MCF 10A (cell line): ENCODE measurements at regions of chr4 and their contacts with region 1.

Region 1: DNA sequence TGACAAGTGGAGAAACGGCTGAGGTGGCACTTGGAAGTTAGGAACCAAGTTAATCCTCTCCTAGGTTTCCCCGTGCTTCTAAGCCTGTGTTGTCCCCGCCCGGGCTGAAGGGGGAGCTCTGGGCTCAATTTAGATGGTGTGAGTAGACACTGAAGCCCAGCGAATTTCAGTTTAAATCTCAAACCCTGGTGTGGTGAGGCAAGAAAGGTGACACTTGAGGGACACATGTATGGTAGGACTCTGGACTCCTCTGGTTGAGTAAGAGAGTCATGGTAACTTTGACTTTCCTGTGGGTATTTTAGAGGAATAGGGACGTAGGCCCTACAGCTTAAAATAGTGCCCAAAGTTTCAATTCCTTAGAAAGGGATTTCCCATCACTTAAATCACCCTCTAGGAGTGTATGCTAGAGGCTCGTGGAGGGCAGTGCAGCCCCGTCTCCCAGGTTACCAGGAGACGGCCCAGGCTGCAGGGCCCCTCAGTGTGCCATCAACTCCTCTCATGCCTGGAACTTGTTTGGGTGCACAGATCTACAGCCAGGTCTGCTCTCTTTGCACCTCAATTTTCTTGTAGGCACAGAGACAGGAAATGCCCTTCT is 24.0 kb downstream of the HAND2 start:
- DNase-seq: peak; percentile 60
- H3K4me3 Mint-ChIP-seq: no peak overlapping the region
- H3K27ac Mint-ChIP-seq: no peak overlapping the region
- H3K4me1 Mint-ChIP-seq: no peaks in the 10 kb centered on the region
- H3K27me3 Mint-ChIP-seq: no peaks in the 10 kb centered on the region
- CTCF ChIP-seq: peak; percentile 44

Region 2: DNA sequence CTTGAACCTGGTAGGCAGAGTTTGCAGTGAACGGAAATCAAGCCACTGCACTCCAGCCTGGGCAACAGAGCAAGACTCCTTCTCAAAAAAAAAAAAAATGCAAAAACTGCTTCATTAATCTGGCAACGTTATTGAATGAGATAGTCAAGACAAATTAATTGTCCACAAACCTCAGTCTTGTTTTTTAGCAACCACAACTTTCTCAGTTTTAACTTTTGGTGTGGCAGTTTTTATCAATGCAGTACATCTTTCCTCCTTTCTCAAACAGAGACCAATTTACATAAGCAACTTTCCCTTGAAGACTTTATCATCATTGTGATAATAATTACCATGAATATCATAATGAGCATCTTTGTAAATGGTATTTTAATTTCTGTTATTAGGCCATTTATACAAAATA is 1754.5 kb before region 1 on chr4:
- CTCF ChIA-PET with region 1: no interaction called
- POLR2A ChIA-PET with region 1: no interaction called
- intact Hi-C with region 1: no loop called
- DNase-seq: no peak
- H3K4me3 Mint-ChIP-seq: no peak overlapping the region
- H3K27ac Mint-ChIP-seq: no peak overlapping the region
- H3K4me1 Mint-ChIP-seq: no peaks in the 10 kb centered on the region
- H3K27me3 Mint-ChIP-seq: peaks cover 70% of the 10 kb centered on the region
- CTCF ChIP-seq: no peak

Region 3: GRCh38 chr4:173494013-173494970 is 11.7 kb before region 1 on chr4:
- CTCF ChIA-PET with region 1: interaction called, 15 read pairs
- POLR2A ChIA-PET with region 1: no interaction called
- intact Hi-C with region 1: no loop called
- DNase-seq: peak; percentile 76
- H3K4me3 Mint-ChIP-seq: peak overlapping the region; percentile 67
- H3K27ac Mint-ChIP-seq: no peak overlapping the region
- H3K4me1 Mint-ChIP-seq: peaks cover 8% of the 10 kb centered on the region
- H3K27me3 Mint-ChIP-seq: peaks cover 14% of the 10 kb centered on the region
- CTCF ChIP-seq: peak; percentile 61

Region 4: DNA sequence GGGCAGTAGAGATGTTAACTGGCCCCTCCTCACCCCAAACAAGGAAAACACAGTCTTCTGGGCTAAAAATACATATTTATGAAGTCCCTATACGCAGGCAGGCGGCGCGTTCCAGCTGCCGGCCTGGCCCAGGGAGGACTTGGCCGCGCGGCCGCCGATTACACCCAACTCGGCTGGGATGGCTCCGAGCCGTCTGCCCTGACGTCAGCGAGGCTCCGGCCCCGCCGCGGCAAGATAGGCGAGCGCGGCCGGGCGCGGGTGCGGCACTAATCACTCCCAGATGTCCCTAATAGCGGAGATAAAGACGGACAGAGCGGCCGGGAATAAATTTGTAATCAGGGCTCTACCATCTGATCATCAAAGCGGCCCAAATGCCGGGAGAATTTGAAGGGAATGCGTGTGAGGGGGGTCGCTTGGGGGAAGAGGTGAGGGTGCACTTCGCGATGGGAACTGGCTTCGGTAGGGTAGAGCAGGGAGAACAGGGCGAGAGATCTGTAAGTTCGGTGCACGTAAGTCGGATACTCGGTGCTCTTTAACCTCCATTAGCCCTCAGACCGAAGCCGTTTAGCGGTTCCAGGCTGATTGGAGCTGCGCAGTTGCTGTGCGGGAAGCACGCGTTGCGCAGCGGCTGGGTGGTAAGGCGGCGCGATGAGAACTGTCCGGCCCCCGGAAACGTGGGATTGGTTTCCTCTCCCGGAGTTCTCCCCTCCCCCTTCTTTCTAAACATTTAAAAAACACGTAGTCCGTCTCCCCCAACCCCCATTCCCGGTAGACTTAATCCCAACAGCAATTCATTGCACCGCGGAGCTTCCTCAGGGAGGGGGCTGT is 16.3 kb after region 1 on chr4:
- CTCF ChIA-PET with region 1: no interaction called
- POLR2A ChIA-PET with region 1: no interaction called
- intact Hi-C with region 1: no loop called
- DNase-seq: no peak
- H3K4me3 Mint-ChIP-seq: no peak overlapping the region
- H3K27ac Mint-ChIP-seq: no peak overlapping the region
- H3K4me1 Mint-ChIP-seq: no peaks in the 10 kb centered on the region
- H3K27me3 Mint-ChIP-seq: no peaks in the 10 kb centered on the region
- CTCF ChIP-seq: no peak

Region 5: GRCh38 chr4:173990126-173990868 is 484.3 kb after region 1 on chr4:
- CTCF ChIA-PET with region 1: interaction called, 24 read pairs
- POLR2A ChIA-PET with region 1: no interaction called
- intact Hi-C with region 1: loop called (anchors 1 kb)
- DNase-seq: peak; percentile 42
- H3K4me3 Mint-ChIP-seq: no peak overlapping the region
- H3K27ac Mint-ChIP-seq: no peak overlapping the region
- H3K4me1 Mint-ChIP-seq: no peaks in the 10 kb centered on the region
- H3K27me3 Mint-ChIP-seq: peaks cover 96% of the 10 kb centered on the region
- CTCF ChIP-seq: peak; percentile 61

Region 6: GRCh38 chr4:174120446-174121295 is 614.6 kb after region 1 on chr4:
- CTCF ChIA-PET with region 1: interaction called, 21 read pairs
- POLR2A ChIA-PET with region 1: no interaction called
- intact Hi-C with region 1: loop called (anchors 1 kb)
- DNase-seq: peak; percentile 66
- H3K4me3 Mint-ChIP-seq: peak overlapping the region; percentile 73
- H3K27ac Mint-ChIP-seq: no peak overlapping the region
- H3K4me1 Mint-ChIP-seq: no peaks in the 10 kb centered on the region
- H3K27me3 Mint-ChIP-seq: peaks cover 84% of the 10 kb centered on the region
- CTCF ChIP-seq: peak; percentile 32

Region 7: DNA sequence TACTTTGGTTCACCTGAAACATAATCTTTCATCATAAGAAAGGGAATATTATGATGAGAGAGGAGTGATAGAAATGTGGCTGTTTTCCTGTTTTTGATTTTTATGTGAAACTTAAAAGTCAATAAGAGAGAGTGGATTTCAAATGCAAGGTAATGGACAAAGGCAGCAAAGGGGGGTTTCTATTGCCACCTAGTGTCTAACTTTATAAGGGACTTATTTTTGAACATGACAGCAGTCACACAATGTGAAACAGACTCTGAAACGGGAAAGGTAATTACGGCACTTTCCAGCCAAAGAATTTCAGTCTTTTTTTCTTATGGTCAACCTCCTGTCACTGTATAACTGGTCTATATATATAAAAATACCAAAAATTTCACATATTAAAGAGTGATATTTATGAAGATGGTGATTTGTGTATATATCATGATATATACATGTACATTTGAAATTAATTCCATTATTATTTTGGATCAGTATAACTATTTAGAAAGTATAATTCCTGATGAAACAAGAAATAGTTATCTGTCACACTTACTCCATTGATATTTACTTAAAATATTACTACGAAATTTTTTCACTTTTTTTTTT is 650.3 kb after region 1 on chr4:
- CTCF ChIA-PET with region 1: interaction called, 5 read pairs
- POLR2A ChIA-PET with region 1: no interaction called
- intact Hi-C with region 1: loop called (anchors 1 kb)
- DNase-seq: peak; percentile 41
- H3K4me3 Mint-ChIP-seq: no peak overlapping the region
- H3K27ac Mint-ChIP-seq: no peak overlapping the region
- H3K4me1 Mint-ChIP-seq: no peaks in the 10 kb centered on the region
- H3K27me3 Mint-ChIP-seq: peaks cover 95% of the 10 kb centered on the region
- CTCF ChIP-seq: no peak

Region 8: GRCh38 chr4:174318829-174319764 is 813.1 kb after region 1 on chr4:
- CTCF ChIA-PET with region 1: interaction called, 4 read pairs
- POLR2A ChIA-PET with region 1: no interaction called
- intact Hi-C with region 1: loop called (anchors 10 kb)
- DNase-seq: peak; percentile 48
- H3K4me3 Mint-ChIP-seq: no peak overlapping the region
- H3K27ac Mint-ChIP-seq: no peak overlapping the region
- H3K4me1 Mint-ChIP-seq: peaks cover 8% of the 10 kb centered on the region
- H3K27me3 Mint-ChIP-seq: no peaks in the 10 kb centered on the region
- CTCF ChIP-seq: peak; percentile 52